ENCODE measurements at regions of chr3 and their contacts with region 1.

Region 1: GRCh38 chr3:46368569-46368968 is 2.2 kb upstream of the CCR5 start:
- DNase-seq: peak; percentile 71 to 81 (median 75)
- H3K4me3 ChIP-seq: no peak overlapping the region
- H3K4me3 Mint-ChIP-seq: peak overlapping the region in 7 of 8 donors; percentile 62 to 80 (median 73)
- H3K27ac ChIP-seq: peak overlapping the region; percentile 52
- H3K27ac Mint-ChIP-seq: peak overlapping the region; percentile 57 to 95 (median 83)
- H3K4me1 ChIP-seq: peaks cover 63% of the 10 kb centered on the region
- H3K4me1 Mint-ChIP-seq: peaks cover 42 to 82% (median 67%) of the 10 kb centered on the region in 4 donors
- H3K27me3 ChIP-seq: no peaks in the 10 kb centered on the region
- H3K27me3 Mint-ChIP-seq: no peaks in the 10 kb centered on the region

Region 2: GRCh38 chr3:45906681-45907407 is 461.7 kb before region 1 on chr3:
- CTCF ChIA-PET with region 1: no interaction called
- POLR2A ChIA-PET with region 1: no interaction called
- intact Hi-C with region 1: no loop called
- DNase-seq: no peak
- H3K4me3 ChIP-seq: no peak overlapping the region
- H3K4me3 Mint-ChIP-seq: peak overlapping the region in 1 of 8 donors; percentile 62
- H3K27ac ChIP-seq: no peak overlapping the region
- H3K27ac Mint-ChIP-seq: peak overlapping the region in 3 of 7 donors; percentile 30 to 51 (median 35)
- H3K4me1 ChIP-seq: peaks cover 34% of the 10 kb centered on the region
- H3K4me1 Mint-ChIP-seq: peaks cover 22 to 55% (median 35%) of the 10 kb centered on the region in 4 donors
- H3K27me3 ChIP-seq: no peaks in the 10 kb centered on the region
- H3K27me3 Mint-ChIP-seq: no peaks in the 10 kb centered on the region

Region 3: GRCh38 chr3:45938864-45939263 is 429.7 kb before region 1 on chr3:
- CTCF ChIA-PET with region 1: interaction called, 41 read pairs
- POLR2A ChIA-PET with region 1: interaction called, 11 read pairs
- intact Hi-C with region 1: loop called (anchors 2 kb)
- DNase-seq: peak; percentile 79 to 83 (median 80)
- H3K4me3 ChIP-seq: no peak overlapping the region
- H3K4me3 Mint-ChIP-seq: peak overlapping the region in 1 of 8 donors; percentile 14
- H3K27ac ChIP-seq: no peak overlapping the region
- H3K27ac Mint-ChIP-seq: peak overlapping the region in 3 of 7 donors; percentile 16 to 82 (median 77)
- H3K4me1 ChIP-seq: peaks cover 43% of the 10 kb centered on the region
- H3K4me1 Mint-ChIP-seq: peaks cover 27 to 52% (median 42%) of the 10 kb centered on the region in 4 donors
- H3K27me3 ChIP-seq: no peaks in the 10 kb centered on the region
- H3K27me3 Mint-ChIP-seq: no peaks in the 10 kb centered on the region

Region 4: DNA sequence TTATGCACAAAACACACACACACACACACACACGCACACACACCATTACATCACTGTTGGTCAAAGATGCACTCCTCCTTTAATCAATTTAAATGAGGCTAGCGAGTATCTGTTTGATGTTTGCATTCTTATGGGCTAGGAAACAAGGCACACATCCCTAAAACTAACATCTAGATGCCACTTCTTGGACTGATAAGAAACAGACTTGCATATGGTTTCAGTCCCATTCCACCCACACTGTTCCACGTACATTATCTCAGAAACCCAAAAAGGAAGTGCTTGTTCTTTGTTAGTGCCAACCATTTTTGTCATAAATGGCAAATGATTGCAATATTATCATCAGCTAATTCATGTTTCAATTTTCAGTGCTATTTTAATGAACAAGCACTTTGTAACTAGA is 230.0 kb before region 1 on chr3:
- CTCF ChIA-PET with region 1: no interaction called
- POLR2A ChIA-PET with region 1: no interaction called
- intact Hi-C with region 1: no loop called
- DNase-seq: no peak
- H3K4me3 ChIP-seq: no peak overlapping the region
- H3K4me3 Mint-ChIP-seq: no peak overlapping the region
- H3K27ac ChIP-seq: no peak overlapping the region
- H3K27ac Mint-ChIP-seq: no peak overlapping the region
- H3K4me1 ChIP-seq: no peaks in the 10 kb centered on the region
- H3K4me1 Mint-ChIP-seq: peaks cover 0 to 1% (median 0%) of the 10 kb centered on the region in 4 donors
- H3K27me3 ChIP-seq: no peaks in the 10 kb centered on the region
- H3K27me3 Mint-ChIP-seq: no peaks in the 10 kb centered on the region

Region 5: GRCh38 chr3:46208167-46208704 is 160.3 kb before region 1 on chr3 and contains the start of gene CCR1:
- CTCF ChIA-PET with region 1: interaction called, 34 read pairs
- POLR2A ChIA-PET with region 1: interaction called, 12 read pairs
- intact Hi-C with region 1: no loop called
- DNase-seq: peak; percentile 4 to 44 (median 16)
- H3K4me3 ChIP-seq: no peak within 1 kb of the TSS
- H3K4me3 Mint-ChIP-seq: peak within 1 kb of the TSS in 7 of 8 donors; percentile 5 to 58 (median 41)
- H3K27ac ChIP-seq: no peak within 1 kb of the TSS
- H3K27ac Mint-ChIP-seq: peak within 1 kb of the TSS; percentile 54 to 91 (median 74)
- H3K4me1 ChIP-seq: peaks cover 31% of the 10 kb centered on the region
- H3K4me1 Mint-ChIP-seq: peaks cover 16 to 46% (median 26%) of the 10 kb centered on the region in 4 donors
- H3K27me3 ChIP-seq: no peaks in the 10 kb centered on the region
- H3K27me3 Mint-ChIP-seq: no peaks in the 10 kb centered on the region
- total RNA-seq, gene CCR1: 1.3 to 2.0 TPM

Region 6: GRCh38 chr3:46276502-46277099 is 92.0 kb before region 1 on chr3:
- CTCF ChIA-PET with region 1: interaction called, 275 read pairs
- POLR2A ChIA-PET with region 1: interaction called, 86 read pairs
- intact Hi-C with region 1: loop called (anchors 1 kb)
- DNase-seq: peak; percentile 69 to 81 (median 73)
- H3K4me3 ChIP-seq: no peak overlapping the region
- H3K4me3 Mint-ChIP-seq: peak overlapping the region in 6 of 8 donors; percentile 3 to 81 (median 34)
- H3K27ac ChIP-seq: no peak overlapping the region
- H3K27ac Mint-ChIP-seq: peak overlapping the region; percentile 4 to 96 (median 81)
- H3K4me1 ChIP-seq: peaks cover 46% of the 10 kb centered on the region
- H3K4me1 Mint-ChIP-seq: peaks cover 29 to 53% (median 38%) of the 10 kb centered on the region in 4 donors
- H3K27me3 ChIP-seq: no peaks in the 10 kb centered on the region
- H3K27me3 Mint-ChIP-seq: peaks cover 0 to 1% of the 10 kb centered on the region in 2 donors

Region 7: GRCh38 chr3:46312991-46313390 is 55.6 kb before region 1 on chr3:
- CTCF ChIA-PET with region 1: interaction called, 14 read pairs
- POLR2A ChIA-PET with region 1: no interaction called
- intact Hi-C with region 1: no loop called
- DNase-seq: no peak
- H3K4me3 ChIP-seq: no peak overlapping the region
- H3K4me3 Mint-ChIP-seq: no peak overlapping the region
- H3K27ac ChIP-seq: no peak overlapping the region
- H3K27ac Mint-ChIP-seq: no peak overlapping the region
- H3K4me1 ChIP-seq: peaks cover 6% of the 10 kb centered on the region
- H3K4me1 Mint-ChIP-seq: peaks cover 0 to 8% (median 2%) of the 10 kb centered on the region in 4 donors
- H3K27me3 ChIP-seq: no peaks in the 10 kb centered on the region
- H3K27me3 Mint-ChIP-seq: no peaks in the 10 kb centered on the region

Region 8: DNA sequence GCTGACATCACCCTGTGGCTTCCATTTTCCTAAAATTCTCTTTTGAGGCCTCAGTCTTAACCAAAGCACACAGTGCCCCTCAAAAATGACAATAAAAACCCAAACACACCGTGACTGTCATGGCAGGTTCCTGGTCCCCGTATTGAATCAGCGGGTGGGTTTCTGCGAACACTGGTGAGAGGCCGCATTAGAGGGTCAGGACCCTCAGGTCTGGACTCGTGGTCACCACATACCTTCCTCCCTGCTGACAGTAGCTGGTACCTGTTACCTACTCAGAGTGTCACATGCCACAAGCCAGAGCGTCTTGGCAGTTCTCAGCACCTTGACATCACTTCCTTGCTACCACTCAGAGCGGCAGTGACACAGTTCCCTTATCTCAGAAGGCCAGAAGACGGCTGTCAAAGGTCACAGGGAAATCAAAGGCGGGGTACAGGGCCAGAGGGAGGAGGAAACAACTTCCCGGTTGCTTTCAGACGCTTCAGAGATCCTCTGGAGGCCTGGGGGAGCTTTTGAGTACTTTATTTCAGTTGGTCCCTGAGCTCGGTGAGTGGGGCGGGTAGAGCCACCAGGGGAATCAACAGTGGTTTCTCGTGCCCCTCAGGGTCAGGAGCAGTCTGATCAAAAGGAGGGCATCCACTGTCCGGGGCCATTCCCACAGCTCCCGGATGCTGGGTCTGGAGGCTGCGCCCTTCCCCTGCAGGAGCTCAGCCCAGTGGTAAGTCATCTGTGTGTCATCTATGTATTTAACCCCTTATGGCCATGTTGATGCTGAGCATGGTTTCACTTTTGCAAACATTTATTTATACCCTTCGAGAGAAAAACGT is 38.4 kb after region 1 on chr3 and contains the starts of genes CCR5AS and CCRL2:
- CTCF ChIA-PET with region 1: no interaction called
- POLR2A ChIA-PET with region 1: no interaction called
- intact Hi-C with region 1: no loop called
- DNase-seq: peak; percentile 15 to 62 (median 32)
- H3K4me3 ChIP-seq: peak within 1 kb of the TSS in 1 of 2 donors; percentile 27
- H3K4me3 Mint-ChIP-seq: peak within 1 kb of the TSS; percentile 68 to 85 (median 78)
- H3K27ac ChIP-seq: no peak within 1 kb of the TSS
- H3K27ac Mint-ChIP-seq: peak within 1 kb of the TSS; percentile 53 to 90 (median 84)
- H3K4me1 ChIP-seq: peaks cover 18% of the 10 kb centered on the region
- H3K4me1 Mint-ChIP-seq: peaks cover 3 to 18% (median 12%) of the 10 kb centered on the region in 4 donors
- H3K27me3 ChIP-seq: no peaks in the 10 kb centered on the region
- H3K27me3 Mint-ChIP-seq: peaks cover 2 to 7% of the 10 kb centered on the region in 2 donors
- total RNA-seq, gene CCRL2: 0.58 to 1.8 TPM

Region 9: GRCh38 chr3:46558184-46559043 is 189.8 kb after region 1 on chr3:
- CTCF ChIA-PET with region 1: interaction called, 4 read pairs
- POLR2A ChIA-PET with region 1: no interaction called
- intact Hi-C with region 1: loop called (anchors 2 kb)
- DNase-seq: peak; percentile 68 to 74 (median 73)
- H3K4me3 ChIP-seq: peak overlapping the region in 1 of 2 donors; percentile 25
- H3K4me3 Mint-ChIP-seq: peak overlapping the region; percentile 76 to 87 (median 82)
- H3K27ac ChIP-seq: no peak overlapping the region
- H3K27ac Mint-ChIP-seq: peak overlapping the region in 6 of 7 donors; percentile 13 to 71 (median 36)
- H3K4me1 ChIP-seq: peaks cover 14% of the 10 kb centered on the region
- H3K4me1 Mint-ChIP-seq: peaks cover 10 to 17% (median 15%) of the 10 kb centered on the region in 4 donors
- H3K27me3 ChIP-seq: no peaks in the 10 kb centered on the region
- H3K27me3 Mint-ChIP-seq: peaks cover 1 to 4% of the 10 kb centered on the region in 2 donors

Region 10: GRCh38 chr3:46947981-46948791 is 579.6 kb after region 1 on chr3:
- CTCF ChIA-PET with region 1: no interaction called
- POLR2A ChIA-PET with region 1: no interaction called
- intact Hi-C with region 1: no loop called
- DNase-seq: peak; percentile 73 to 97 (median 83)
- H3K4me3 ChIP-seq: peak overlapping the region in 1 of 2 donors; percentile 13
- H3K4me3 Mint-ChIP-seq: peak overlapping the region; percentile 56 to 85 (median 78)
- H3K27ac ChIP-seq: peak overlapping the region; percentile 69
- H3K27ac Mint-ChIP-seq: peak overlapping the region; percentile 95 to 99 (median 97)
- H3K4me1 ChIP-seq: peaks cover 88% of the 10 kb centered on the region
- H3K4me1 Mint-ChIP-seq: peaks cover 70 to 94% (median 80%) of the 10 kb centered on the region in 4 donors
- H3K27me3 ChIP-seq: no peaks in the 10 kb centered on the region
- H3K27me3 Mint-ChIP-seq: no peaks in the 10 kb centered on the region

Measured in CD4-positive, alpha-beta memory T cell (primary cell).